ENCODE measurements at regions of chr14 and their contacts with region 1.

Region 1: DNA sequence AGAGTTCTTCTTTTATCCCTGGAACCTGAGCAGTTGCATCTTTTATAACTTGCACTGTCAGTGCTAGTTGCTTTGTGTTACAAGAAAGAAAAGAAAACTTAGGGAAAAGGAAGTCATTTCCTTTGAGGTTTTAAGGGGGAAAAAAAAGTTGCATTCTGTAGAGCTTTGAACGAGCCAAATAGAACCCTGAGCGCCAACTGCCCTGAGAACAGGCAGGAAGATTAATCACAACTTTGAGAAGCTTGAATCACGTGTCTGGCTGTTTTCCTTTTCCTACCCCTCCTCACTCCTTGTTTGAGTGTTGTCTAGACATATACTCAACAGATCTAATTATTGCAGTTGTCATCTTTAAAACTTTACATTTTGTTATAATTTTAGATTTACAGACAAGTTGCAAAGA is 12.5 kb downstream of the PCNX1 start:
- DNase-seq: peak; percentile 29
- ATAC-seq: no peak
- H3K4me3 Mint-ChIP-seq: peak overlapping the region; percentile 43
- H3K27ac Mint-ChIP-seq: peak overlapping the region; percentile 91
- H3K4me1 Mint-ChIP-seq: peaks cover 84% of the 10 kb centered on the region
- H3K27me3 Mint-ChIP-seq: no peaks in the 10 kb centered on the region
- CTCF ChIP-seq: no peak

Region 2: DNA sequence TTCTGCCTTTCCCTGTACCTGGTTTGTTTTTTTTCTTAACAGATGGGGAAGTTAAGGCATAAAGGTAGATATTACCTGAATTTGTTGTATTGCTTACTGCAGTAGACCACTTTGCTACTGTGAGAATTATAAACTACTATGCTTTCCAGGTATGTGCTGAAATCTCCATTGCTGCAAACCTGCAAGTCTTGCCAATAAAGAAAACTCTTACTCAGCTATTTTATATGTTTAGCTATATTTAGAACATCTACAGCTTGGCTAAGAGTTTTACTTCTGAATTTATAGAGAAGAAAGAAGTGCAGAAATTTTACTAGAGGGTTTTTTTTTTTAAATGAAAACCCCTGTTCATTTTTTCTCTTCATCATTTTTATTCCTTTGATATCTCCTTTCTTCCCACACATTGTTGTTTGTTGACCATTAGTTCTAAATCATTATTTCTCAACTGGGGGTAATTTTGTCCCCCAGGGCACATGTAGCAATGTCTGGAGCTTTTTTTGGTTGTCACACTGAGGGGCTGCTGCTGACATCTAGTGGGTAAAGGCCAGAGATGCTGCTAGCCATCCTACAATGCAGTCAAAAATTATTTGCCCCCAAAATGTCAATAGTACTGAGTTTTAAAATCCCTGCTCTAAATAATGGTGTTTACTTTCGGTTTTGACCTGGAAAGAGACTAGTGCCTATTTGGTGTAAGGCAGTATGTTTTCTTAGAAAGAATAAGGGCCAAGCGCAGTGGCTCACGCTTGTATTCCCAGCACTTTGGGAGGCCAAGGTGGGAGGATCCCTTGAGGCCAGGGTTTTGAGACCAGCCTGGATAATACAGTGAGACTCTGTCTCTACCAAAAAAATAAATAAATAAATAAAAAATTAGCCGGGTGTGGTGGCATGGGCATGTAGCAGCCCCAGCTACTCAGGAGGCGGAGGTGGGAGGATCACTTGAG is 36.0 kb after region 1 on chr14:
- CTCF ChIA-PET with region 1: interaction called, 30 read pairs
- POLR2A ChIA-PET with region 1: no interaction called
- intact Hi-C with region 1: no loop called
- DNase-seq: peak; percentile 58
- ATAC-seq: peak; percentile 80
- H3K4me3 Mint-ChIP-seq: no peak overlapping the region
- H3K27ac Mint-ChIP-seq: no peak overlapping the region
- H3K4me1 Mint-ChIP-seq: peaks cover 37% of the 10 kb centered on the region
- H3K27me3 Mint-ChIP-seq: no peaks in the 10 kb centered on the region
- CTCF ChIP-seq: peak; percentile 78

Region 3: DNA sequence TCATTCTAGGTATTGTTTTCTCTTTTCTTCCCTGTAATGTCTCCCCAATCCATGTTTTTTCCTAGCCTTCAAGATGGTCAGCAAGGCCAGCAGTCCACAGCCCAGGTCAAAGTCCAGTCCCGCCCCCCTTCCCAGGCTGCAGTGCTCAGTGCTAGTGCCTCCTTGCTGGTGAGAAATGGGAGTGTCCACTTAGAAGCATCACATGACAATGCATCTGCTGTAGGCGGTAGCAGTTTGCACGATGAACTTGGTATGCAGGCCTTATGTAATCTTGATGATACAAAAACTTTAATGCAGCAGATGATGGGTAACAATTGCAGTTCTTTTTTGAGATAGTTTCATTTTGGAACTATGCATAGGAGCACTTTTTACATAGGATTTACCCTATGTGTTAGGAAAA is 75.9 kb after region 1 on chr14:
- CTCF ChIA-PET with region 1: no interaction called
- POLR2A ChIA-PET with region 1: no interaction called
- intact Hi-C with region 1: no loop called
- DNase-seq: no peak
- ATAC-seq: no peak
- H3K4me3 Mint-ChIP-seq: no peak overlapping the region
- H3K27ac Mint-ChIP-seq: no peak overlapping the region
- H3K4me1 Mint-ChIP-seq: peaks cover 50% of the 10 kb centered on the region
- H3K27me3 Mint-ChIP-seq: no peaks in the 10 kb centered on the region
- CTCF ChIP-seq: no peak